K562 (cell line): ENCODE measurements at regions of chr5 and their contacts with region 1.

Region 1: GRCh38 chr5:108919591-108920326 is 172.1 kb downstream of the FER start:
- DNase-seq: no peak
- ATAC-seq: no peak
- H3K4me3 ChIP-seq: no peak overlapping the region
- H3K27ac ChIP-seq: no peak overlapping the region
- H3K4me1 ChIP-seq: no peaks in the 10 kb centered on the region
- H3K27me3 ChIP-seq: no peaks in the 10 kb centered on the region
- CTCF ChIP-seq: peak in 1 of 3 experiments; percentile 39; a peak in 2 of 6 replicates
- EP300 ChIP-seq: no peak
- POLR2A ChIP-seq: no peak
- RAD21 ChIP-seq: peak in 1 of 2 experiments; percentile 48; a peak in 2 of 4 replicates

Region 2: GRCh38 chr5:108642167-108642906 is 277.4 kb before region 1 on chr5:
- CTCF ChIA-PET with region 1: no interaction called
- POLR2A ChIA-PET with region 1: no interaction called
- in situ Hi-C with region 1: no loop called
- intact Hi-C with region 1: loop called (anchors 5 kb)
- DNase-seq: peak; percentile 57 to 82 (median 68)
- ATAC-seq: peak; percentile 100
- H3K4me3 ChIP-seq: no peak overlapping the region
- H3K27ac ChIP-seq: peak overlapping the region; percentile 48; the same call in 1 of the 3 replicates
- H3K4me1 ChIP-seq: peaks cover 0 to 6% of the 10 kb centered on the region in 2 experiments; a peak in 1 of 5 replicates
- H3K27me3 ChIP-seq: no peaks in the 10 kb centered on the region; a peak in 1 of 5 replicates
- CTCF ChIP-seq: peak; percentile 82 to 92 (median 87)
- EP300 ChIP-seq: no peak
- POLR2A ChIP-seq: no peak
- RAD21 ChIP-seq: peak; percentile 89 to 91

Region 3: DNA sequence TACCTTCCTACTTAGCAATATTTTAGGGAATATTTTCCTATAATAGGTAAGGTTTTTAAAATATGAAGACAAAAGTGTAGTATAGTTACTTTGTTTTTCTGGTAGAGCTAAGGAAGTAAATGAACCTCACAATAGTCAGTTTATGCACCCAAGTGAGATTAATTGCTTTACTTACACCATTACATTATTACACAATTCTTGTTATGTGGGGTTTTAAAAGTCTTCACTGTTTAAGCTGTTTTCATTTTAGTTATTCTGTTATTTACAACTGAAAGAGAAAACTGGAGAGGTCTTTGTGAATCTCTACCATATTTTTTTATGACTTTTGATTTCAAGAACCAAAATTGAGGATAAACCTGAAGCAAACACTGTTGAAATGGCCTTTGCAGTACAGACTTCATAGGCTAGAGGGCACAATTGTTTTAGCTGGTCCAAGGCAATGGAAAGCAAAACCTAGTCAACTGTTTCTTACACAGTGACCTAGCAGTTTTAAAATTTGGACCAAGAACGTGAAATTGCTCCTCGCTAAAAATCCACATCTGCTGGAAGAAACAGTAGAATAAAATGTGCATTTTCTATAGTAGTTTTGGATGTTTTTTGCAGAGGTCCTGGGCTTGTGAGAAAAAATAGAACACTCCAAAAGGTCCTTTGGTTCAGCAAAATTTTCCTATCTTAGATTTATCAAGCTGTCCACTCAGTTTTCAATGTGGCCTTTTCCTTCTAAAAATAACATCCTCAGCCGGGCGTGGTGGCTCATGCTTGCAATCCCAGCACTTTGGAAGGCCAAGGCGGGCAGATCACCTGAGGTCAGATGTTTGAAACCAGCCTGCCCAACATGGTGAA is 238.5 kb before region 1 on chr5:
- CTCF ChIA-PET with region 1: interaction called, 3 read pairs
- POLR2A ChIA-PET with region 1: no interaction called
- in situ Hi-C with region 1: no loop called
- intact Hi-C with region 1: loop called (anchors 5 kb)
- DNase-seq: peak; percentile 26 to 81 (median 48)
- ATAC-seq: peak; percentile 94
- H3K4me3 ChIP-seq: no peak overlapping the region
- H3K27ac ChIP-seq: 0 out of 3 replicates have a peak overlapping the region, but pooled peaks have one; percentile 43
- H3K4me1 ChIP-seq: peaks cover 0 to 6% of the 10 kb centered on the region in 2 experiments; a peak in 2 of 5 replicates
- H3K27me3 ChIP-seq: no peaks in the 10 kb centered on the region; a peak in 1 of 5 replicates
- CTCF ChIP-seq: peak; percentile 68 to 91 (median 83)
- EP300 ChIP-seq: no peak
- POLR2A ChIP-seq: no peak
- RAD21 ChIP-seq: peak; percentile 95 to 98

Region 4: DNA sequence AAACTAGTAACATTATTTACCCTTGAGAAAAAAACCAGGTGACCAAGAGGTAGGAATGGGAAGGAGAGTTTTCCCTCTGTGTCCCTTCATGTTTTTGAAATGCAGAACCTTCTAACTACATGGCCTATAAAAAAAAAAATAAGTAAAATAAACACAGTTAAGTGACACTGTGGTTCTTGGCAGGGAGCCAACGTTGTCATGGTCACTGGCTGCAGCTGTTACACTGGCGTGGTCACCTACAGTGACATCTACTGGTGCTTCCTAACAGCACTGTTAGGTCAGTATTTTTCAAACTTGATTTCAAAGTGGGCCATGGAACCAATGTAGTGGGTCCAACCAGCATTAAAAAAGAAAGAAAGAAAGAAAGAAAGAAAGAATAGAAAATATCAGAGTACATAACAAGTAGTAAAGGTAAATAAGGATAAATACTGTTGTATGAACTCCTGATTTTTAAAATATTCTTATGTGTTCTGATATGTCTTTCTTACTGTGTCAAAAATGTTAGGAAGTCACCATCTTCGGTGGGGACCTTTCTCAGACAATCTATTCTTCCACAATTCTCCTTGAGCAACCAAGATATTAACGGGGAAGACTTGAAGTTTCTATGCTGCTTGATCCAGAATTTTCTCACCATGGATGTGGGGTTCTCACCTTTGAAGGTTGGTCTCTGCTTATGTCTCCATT is 549.1 kb after region 1 on chr5:
- CTCF ChIA-PET with region 1: no interaction called
- POLR2A ChIA-PET with region 1: no interaction called
- in situ Hi-C with region 1: no loop called
- intact Hi-C with region 1: loop called (anchors 5 kb)
- DNase-seq: peak; percentile 84 to 95 (median 88)
- ATAC-seq: peak; percentile 99
- H3K4me3 ChIP-seq: no peak overlapping the region
- H3K27ac ChIP-seq: no peak overlapping the region
- H3K4me1 ChIP-seq: peaks cover 0 to 5% of the 10 kb centered on the region in 2 experiments; a peak in 1 of 5 replicates
- H3K27me3 ChIP-seq: peaks cover 0 to 4% of the 10 kb centered on the region in 2 experiments; a peak in 1 of 5 replicates
- CTCF ChIP-seq: peak; percentile 71 to 93 (median 81)
- EP300 ChIP-seq: 0 out of 2 replicates have a peak, but pooled peaks have one; percentile 32
- POLR2A ChIP-seq: no peak
- RAD21 ChIP-seq: peak; percentile 68 to 86

Region 5: GRCh38 chr5:109574985-109575384 is 655.2 kb after region 1 on chr5:
- CTCF ChIA-PET with region 1: no interaction called
- POLR2A ChIA-PET with region 1: no interaction called
- in situ Hi-C with region 1: no loop called
- intact Hi-C with region 1: loop called (anchors 10 kb)
- DNase-seq: no peak
- ATAC-seq: no peak
- H3K4me3 ChIP-seq: no peak overlapping the region
- H3K27ac ChIP-seq: no peak overlapping the region
- H3K4me1 ChIP-seq: peaks cover 4 to 32% of the 10 kb centered on the region in 2 experiments; a peak in 4 of 5 replicates
- H3K27me3 ChIP-seq: no peaks in the 10 kb centered on the region
- CTCF ChIP-seq: no peak
- EP300 ChIP-seq: no peak
- POLR2A ChIP-seq: no peak
- RAD21 ChIP-seq: no peak